RWPE1 (cell line): ENCODE measurements at regions of chr1 and their contacts with region 1.

Region 1: DNA sequence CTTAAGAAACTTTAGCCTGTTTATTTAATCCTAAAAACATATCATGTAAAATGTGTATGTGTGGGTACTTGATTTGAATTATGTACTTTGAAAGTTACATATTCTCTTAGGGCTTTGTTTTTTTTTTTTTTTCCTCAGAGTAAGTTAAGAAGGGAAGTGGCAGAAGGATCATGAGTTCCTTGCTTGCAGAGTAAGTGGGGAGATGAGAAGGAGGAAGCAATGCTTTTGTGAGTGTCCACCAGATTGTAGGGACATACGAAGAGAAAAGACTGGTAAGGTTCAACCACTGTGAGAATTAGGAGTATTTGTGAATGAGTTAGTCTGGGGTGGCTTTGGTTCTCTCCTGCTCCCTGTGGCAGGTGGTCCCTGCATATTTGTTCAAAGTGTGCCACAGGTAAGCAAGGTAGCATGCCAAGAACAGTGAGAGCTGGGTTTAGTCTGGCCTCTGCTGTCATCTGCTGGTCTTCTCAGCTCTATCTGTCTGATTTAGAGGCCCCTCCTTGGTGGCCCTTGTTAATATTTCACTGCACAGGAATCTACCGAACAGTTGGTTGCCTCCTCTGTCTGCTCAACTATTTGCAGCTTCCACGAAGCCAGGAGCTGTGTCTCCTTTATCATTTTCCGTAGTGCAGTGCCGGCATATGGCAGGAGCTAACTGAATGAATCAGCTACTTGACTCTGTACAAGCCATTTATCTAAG is 9.5 kb downstream of the DNM3 start:
- DNase-seq: no peak
- H3K27ac ChIP-seq: no peak overlapping the region
- CTCF ChIP-seq: no peak

Region 2: DNA sequence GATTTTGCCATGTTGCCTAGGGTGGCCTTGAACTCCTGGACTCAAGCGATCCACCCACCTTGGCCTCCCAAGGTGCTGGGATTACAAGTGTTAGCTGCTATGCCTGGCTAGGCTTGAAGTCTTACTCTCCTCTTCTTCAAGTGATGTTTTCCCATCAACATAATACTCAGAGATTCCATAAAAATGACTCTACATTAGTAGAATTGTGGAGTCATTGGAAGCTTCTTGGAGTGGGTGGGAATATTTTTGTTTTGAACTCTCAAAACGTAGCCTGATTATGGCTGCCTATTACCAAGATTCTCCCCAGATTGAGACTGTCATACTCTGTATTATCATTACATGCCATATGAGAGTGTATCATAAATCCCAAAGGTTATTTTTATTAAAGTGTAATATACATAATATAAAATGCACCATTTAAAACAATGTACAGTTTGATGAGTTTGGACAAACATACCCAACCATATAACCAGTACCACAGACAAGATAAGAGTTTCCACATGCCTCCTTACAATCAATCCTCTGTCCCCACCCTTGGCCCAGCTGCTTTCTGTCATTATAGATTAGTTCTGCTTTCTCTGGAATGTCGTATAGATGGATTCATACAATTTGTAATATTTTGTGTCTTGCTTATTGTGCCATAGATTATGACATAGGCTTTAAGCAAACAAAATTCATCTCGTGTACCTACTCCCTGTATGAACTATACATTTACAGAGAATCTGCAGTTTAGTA is 17.5 kb before region 1 on chr1:
- CTCF ChIA-PET with region 1: interaction called, 11 read pairs
- POLR2A ChIA-PET with region 1: no interaction called
- DNase-seq: no peak
- H3K27ac ChIP-seq: no peak overlapping the region
- CTCF ChIP-seq: no peak

Region 3: GRCh38 chr1:171973421-171973820 is 122.6 kb after region 1 on chr1:
- CTCF ChIA-PET with region 1: no interaction called
- POLR2A ChIA-PET with region 1: no interaction called
- DNase-seq: no peak
- H3K27ac ChIP-seq: no peak overlapping the region
- CTCF ChIP-seq: no peak